ENCODE measurements at regions of chr19 and their contacts with region 1.

Region 1: DNA sequence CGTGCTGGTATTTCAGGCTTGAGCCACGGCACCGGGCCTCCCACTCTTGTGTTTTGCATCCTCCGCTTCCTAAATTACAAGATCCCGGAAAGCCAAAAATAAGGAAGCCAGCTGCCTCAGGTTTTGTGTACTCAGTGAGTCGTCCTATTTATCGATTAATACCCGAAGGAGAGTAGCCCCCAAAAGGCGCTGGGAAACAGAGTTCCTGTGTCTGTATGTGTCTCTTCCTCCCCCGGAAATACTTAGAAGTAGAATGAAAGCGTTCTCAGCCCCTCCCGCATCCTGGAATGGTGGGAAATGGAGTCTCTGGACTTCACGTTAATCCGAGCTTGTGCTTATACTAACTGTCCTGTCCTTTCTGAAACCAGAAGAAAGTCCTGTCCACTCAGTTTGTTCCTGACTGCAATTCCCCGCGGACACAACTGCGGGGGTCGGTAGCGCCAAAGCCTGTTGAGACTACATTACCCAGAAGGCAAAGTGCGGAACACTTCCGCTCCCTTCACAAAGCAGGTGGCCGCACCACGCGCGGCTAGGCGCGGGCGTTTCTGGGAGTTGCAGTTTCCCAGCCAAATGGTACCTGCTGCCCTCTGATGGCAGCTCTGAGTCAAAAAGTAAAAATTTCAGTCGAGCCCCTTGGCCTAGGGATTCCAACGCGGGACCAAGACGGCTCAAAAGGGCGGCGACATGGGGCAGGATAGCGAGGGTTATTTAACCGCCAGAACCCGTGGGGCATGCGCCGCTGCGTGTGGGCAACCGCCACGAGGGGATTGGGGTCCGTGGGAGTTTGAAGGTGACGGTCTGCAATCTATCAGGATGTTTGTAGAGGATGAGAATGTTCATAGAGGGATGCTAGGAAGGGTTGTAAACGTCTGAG is 2.2 kb upstream of the GSK3A start:
- DNase-seq: peak; percentile 92 to 95
- ATAC-seq: peak; percentile 34 to 68 (median 55)
- H3K4me3 ChIP-seq: peak overlapping the region; percentile 83
- H3K27ac ChIP-seq: peak overlapping the region; percentile 93
- H3K4me1 ChIP-seq: peaks cover 39% of the 10 kb centered on the region
- H3K27me3 ChIP-seq: no peaks in the 10 kb centered on the region
- CTCF ChIP-seq: peak; percentile 65

Region 2: DNA sequence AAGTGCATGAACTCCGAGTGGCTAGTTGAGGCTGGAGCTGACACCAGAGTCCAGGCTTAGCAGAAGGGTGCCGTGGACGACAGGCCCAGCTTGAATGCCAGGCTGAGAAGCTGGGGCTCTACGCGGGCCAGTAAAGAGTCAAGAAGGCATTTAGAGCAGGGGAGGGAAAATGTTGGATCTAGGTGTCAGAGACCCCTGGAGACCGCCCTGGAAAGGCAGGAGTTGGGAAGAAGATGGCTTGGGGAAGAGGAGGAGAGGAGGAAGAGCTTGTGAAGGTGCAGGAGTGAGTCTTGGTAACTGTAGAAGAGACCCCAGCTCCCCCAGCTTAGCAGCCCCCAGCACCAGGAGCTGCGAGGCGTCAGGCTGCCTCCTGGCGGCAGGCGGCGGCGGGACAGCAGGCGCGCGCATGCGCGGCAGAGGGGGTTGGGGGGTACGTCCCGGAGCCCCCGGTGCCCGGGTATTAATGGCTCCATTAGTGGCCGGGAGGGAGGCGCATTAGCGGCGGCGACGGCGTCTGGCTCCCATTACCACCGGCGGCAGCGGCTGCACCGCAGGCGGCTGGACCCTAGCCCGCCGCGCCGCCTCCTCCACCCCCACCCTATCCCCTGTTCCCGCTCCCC is 35.1 kb after region 1 on chr19:
- intact Hi-C with region 1: loop called in 1 of 2 experiments (anchors 2 kb)
- DNase-seq: peak; percentile 61 to 84
- ATAC-seq: peak in 3 of 4 donors; percentile 19 to 54 (median 26)
- H3K4me3 ChIP-seq: peak overlapping the region; percentile 77
- H3K27ac ChIP-seq: peak overlapping the region; percentile 91
- H3K4me1 ChIP-seq: peaks cover 73% of the 10 kb centered on the region
- H3K27me3 ChIP-seq: no peaks in the 10 kb centered on the region
- CTCF ChIP-seq: peak; percentile 92

Region 3: DNA sequence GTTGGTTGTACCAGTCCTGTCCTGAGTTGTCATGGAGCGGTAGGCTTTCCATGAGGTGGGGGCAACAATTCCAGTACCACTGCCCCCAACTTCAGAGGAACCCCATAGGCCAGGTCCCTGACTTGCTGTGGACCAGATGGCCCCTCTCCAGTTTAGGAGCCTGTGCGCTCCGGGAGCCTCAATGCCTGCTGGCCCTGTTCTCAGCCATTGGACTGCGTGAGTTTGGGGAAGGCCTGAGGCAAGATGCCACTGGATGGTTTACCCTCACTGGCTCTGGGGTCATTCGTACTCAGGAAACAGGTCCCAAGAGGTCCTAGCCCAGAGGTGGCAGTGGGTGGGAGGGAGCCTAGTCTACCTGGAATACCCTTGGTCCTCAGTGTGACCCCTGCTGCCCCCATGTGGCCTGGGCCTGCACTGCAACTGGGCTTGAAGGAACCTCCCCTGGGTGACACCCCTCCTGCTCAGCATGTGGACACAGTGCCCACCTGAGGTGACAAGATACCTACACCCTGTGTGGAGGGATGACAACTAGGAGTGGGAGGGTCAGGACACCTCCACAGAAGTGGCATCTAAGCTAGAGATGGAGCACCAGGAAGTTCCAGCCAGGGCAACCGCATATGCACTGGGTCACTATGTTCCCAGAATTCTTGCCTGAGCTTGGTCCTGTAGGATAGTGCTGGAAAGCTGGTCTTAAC is 51.4 kb after region 1 on chr19:
- intact Hi-C with region 1: loop called (anchors 2 to 5 kb)
- DNase-seq: peak; percentile 82 to 91
- ATAC-seq: peak; percentile 79 to 87 (median 84)
- H3K4me3 ChIP-seq: no peak overlapping the region
- H3K27ac ChIP-seq: no peak overlapping the region
- H3K4me1 ChIP-seq: no peaks in the 10 kb centered on the region
- H3K27me3 ChIP-seq: no peaks in the 10 kb centered on the region
- CTCF ChIP-seq: peak; percentile 91

Region 4: DNA sequence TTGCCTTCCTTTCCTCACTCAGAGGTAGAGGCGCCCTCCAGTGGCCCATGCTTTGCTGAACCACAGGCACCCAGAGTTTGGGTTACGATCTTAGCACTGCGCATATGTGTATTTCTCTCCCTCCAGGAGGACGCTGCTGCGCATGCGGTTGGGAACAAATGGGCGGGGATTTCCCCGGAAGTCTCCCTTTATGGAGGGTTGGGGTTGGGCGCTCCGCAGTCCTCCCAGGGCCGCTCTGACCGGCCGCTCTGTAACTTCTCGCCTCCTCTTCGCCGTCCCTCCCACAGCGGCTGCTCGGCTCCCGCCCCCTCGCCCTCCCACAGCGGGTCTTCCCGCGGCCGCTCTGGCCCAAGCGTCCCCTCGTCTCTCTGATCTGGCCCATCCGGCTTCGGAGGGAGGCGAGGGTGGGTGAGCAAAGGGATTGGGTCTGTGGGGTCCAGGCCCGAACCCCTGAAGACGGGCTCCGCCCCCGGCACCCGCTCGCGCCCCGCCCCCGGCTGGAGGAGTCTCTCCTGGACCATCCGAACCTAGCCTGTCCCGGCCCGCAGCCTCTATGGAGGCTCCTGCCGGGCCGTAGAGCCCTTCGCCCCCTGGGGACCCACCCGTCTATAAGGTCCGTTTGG is 80.8 kb after region 1 on chr19 and contains the start of gene MEGF8:
- intact Hi-C with region 1: loop called in 1 of 2 experiments (anchors 2 kb)
- DNase-seq: peak; percentile 97 to 99
- ATAC-seq: peak; percentile 97
- H3K4me3 ChIP-seq: peak within 1 kb of the TSS; percentile 91
- H3K27ac ChIP-seq: peak within 1 kb of the TSS; percentile 77
- H3K4me1 ChIP-seq: peaks cover 17% of the 10 kb centered on the region
- H3K27me3 ChIP-seq: peaks cover 0 to 22% (median 14%) of the 10 kb centered on the region in 3 donors
- CTCF ChIP-seq: peak; percentile 83
- total RNA-seq, gene MEGF8: 7.9 to 21.1 (median 16.8) TPM